Naive thymus-derived CD4-positive, alpha-beta T cell (primary cell): ENCODE measurements at regions of chr6 and their contacts with region 1.

Region 1: DNA sequence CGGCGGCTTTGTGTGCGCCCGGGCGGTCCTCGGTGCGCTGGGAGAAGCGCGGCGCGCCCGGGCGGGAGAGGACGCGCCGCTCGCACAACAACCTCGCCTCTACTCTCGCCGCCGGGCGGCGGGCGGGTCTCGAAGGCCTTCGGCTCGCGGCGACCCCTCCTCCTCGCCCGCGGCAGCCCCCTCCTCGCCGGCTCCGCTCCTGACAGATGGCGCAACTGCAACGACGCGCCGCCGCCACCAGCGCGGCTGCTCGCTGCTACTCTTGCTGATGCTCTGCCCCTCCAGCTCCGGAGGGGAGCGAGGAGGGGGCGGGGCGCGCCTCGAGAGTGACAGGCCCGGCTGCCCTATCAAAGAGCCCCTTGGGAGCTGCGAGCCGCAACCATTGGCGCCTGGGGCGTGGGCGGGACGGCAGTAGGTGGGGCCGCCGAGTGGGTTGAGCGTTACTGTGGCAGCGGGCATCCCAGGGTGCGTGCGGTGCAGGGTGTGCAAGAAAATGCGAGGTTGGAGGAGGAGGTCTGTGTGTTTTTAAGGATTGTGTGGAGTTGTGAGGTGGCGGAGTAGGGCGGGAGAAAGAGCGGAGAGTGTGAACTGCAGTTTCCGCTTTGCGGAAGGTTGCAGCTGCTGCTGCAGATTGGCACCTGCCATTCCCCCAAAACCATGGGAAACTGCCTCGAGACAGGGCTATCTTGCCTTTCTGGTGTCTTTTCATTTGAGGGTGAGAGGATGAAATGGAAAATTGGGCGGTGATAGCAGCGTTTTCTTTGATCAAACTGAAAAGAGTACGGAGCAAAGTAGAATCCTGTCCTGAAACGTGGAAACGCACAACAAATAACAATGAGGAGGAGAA is at the start of gene FYN:
- DNase-seq: peak; percentile 97 to 100 (median 99)
- ATAC-seq: peak; percentile 96
- H3K4me3 ChIP-seq: peak within 1 kb of the TSS; percentile 89
- H3K4me3 Mint-ChIP-seq: peak within 1 kb of the TSS; percentile 95 to 100 (median 98)
- H3K27ac ChIP-seq: peak within 1 kb of the TSS; percentile 86
- H3K27ac Mint-ChIP-seq: peak within 1 kb of the TSS; percentile 93 to 99 (median 96)
- H3K4me1 ChIP-seq: peaks cover 32 to 34% of the 10 kb centered on the region in 2 donors
- H3K4me1 Mint-ChIP-seq: peaks cover 22 to 45% (median 38%) of the 10 kb centered on the region in 7 donors
- H3K27me3 ChIP-seq: no peaks in the 10 kb centered on the region
- H3K27me3 Mint-ChIP-seq: no peaks in the 10 kb centered on the region
- total RNA-seq, gene FYN: 200 to 720 (median 447) TPM

Region 2: DNA sequence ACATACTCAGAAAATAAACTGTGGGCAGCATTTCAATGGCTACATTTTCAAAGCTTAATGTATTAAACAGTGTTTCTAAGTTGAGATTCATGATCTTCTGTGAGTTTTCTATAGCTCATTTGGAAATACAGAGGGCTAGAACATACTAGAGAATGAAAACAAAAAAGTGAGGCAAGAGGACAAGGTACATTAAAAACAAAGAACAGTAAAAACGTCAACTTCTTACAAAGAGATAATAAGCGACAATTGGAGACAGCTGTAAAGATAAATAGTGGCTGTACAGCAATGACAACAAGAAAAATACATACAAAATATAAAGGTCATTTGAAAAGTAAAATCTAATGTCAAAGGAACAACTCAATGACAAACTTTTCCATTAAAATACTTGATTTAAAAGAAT is 484.7 kb before region 1 on chr6:
- CTCF ChIA-PET with region 1: no interaction called
- POLR2A ChIA-PET with region 1: no interaction called
- intact Hi-C with region 1: no loop called
- DNase-seq: no peak
- ATAC-seq: no peak
- H3K4me3 ChIP-seq: no peak overlapping the region
- H3K4me3 Mint-ChIP-seq: no peak overlapping the region
- H3K27ac ChIP-seq: no peak overlapping the region
- H3K27ac Mint-ChIP-seq: no peak overlapping the region
- H3K4me1 ChIP-seq: no peaks in the 10 kb centered on the region
- H3K4me1 Mint-ChIP-seq: no peaks in the 10 kb centered on the region
- H3K27me3 ChIP-seq: no peaks in the 10 kb centered on the region
- H3K27me3 Mint-ChIP-seq: no peaks in the 10 kb centered on the region

Region 3: GRCh38 chr6:111483736-111484632 is 389.4 kb before region 1 on chr6:
- CTCF ChIA-PET with region 1: interaction called, 8 read pairs
- POLR2A ChIA-PET with region 1: interaction called, 3 read pairs
- intact Hi-C with region 1: loop called (anchors 2 to 5 kb)
- DNase-seq: peak in 6 of 9 donors; percentile 80 to 89 (median 86)
- ATAC-seq: peak; percentile 79
- H3K4me3 ChIP-seq: peak overlapping the region; percentile 93
- H3K4me3 Mint-ChIP-seq: peak overlapping the region; percentile 96 to 100 (median 98)
- H3K27ac ChIP-seq: peak overlapping the region; percentile 99
- H3K27ac Mint-ChIP-seq: peak overlapping the region; percentile 95 to 99 (median 99)
- H3K4me1 ChIP-seq: peaks cover 14 to 29% of the 10 kb centered on the region in 2 donors
- H3K4me1 Mint-ChIP-seq: peaks cover 28 to 59% (median 52%) of the 10 kb centered on the region in 7 donors
- H3K27me3 ChIP-seq: no peaks in the 10 kb centered on the region
- H3K27me3 Mint-ChIP-seq: peaks cover 0 to 3% (median 0%) of the 10 kb centered on the region in 5 donors

Region 4: DNA sequence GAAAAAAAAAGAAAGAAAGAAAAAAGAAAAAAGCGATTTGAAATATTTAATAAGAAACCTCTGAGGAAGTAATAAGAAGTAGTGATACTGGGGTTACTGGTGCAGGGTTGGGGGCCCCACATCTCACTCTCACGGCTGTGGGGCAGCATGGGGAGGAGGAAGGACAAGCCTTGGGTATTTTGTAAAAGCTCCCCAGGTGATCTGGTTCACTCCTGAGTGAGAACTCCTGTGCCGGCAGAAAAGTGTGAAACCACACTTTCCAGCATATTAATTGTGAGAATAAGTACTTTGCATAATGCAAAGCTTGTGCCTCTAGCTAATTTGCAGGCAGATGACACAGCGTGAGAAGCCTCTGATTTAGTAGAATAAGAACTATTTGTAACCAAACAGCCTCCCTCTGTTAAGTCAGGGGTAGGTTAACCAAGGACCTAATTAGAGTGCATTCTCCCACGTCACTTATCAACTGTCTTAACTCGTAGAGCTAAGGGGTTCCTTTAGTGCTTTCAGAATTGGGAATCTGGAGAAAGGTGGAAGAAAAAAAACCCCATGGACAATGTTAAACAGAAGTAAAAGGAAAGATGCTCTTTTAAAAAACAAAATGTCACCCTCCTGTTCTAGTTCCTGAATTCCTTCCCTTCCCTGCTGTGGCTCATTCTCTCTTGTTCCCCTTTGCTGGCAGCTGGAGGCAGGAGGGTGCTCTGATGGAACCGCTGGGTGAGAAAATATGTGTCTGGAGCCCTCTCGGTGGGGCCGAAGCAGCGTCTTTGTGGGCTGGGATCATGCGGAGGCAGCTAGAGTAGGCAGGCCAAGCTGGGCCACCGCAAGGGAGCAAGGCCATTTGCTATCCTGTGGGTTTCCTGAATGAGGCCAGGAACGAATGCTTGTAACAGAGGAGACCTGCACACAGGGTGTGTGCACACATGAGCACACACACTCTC is 108.9 kb before region 1 on chr6:
- CTCF ChIA-PET with region 1: interaction called, 5 read pairs
- POLR2A ChIA-PET with region 1: interaction called, 5 read pairs
- intact Hi-C with region 1: loop called (anchors 1 to 2 kb)
- DNase-seq: peak in 2 of 9 donors; percentile 48 to 63
- ATAC-seq: peak; percentile 23
- H3K4me3 ChIP-seq: peak overlapping the region; percentile 18
- H3K4me3 Mint-ChIP-seq: peak overlapping the region; percentile 48 to 94 (median 69)
- H3K27ac ChIP-seq: peak overlapping the region; percentile 97
- H3K27ac Mint-ChIP-seq: peak overlapping the region; percentile 84 to 100 (median 98)
- H3K4me1 ChIP-seq: peaks cover 90 to 93% of the 10 kb centered on the region in 2 donors
- H3K4me1 Mint-ChIP-seq: peaks cover 74 to 100% (median 99%) of the 10 kb centered on the region in 7 donors
- H3K27me3 ChIP-seq: no peaks in the 10 kb centered on the region
- H3K27me3 Mint-ChIP-seq: no peaks in the 10 kb centered on the region

Region 5: GRCh38 chr6:111857674-111858337 is 15.6 kb before region 1 on chr6:
- CTCF ChIA-PET with region 1: no interaction called
- POLR2A ChIA-PET with region 1: interaction called, 6 read pairs
- intact Hi-C with region 1: loop called (anchors 1 to 2 kb)
- DNase-seq: no peak
- ATAC-seq: peak; percentile 26
- H3K4me3 ChIP-seq: no peak overlapping the region
- H3K4me3 Mint-ChIP-seq: peak overlapping the region in 9 of 10 donors; percentile 43 to 93 (median 68)
- H3K27ac ChIP-seq: peak overlapping the region; percentile 32
- H3K27ac Mint-ChIP-seq: peak overlapping the region in 8 of 9 donors; percentile 16 to 90 (median 82)
- H3K4me1 ChIP-seq: peaks cover 59 to 89% of the 10 kb centered on the region in 2 donors
- H3K4me1 Mint-ChIP-seq: peaks cover 0 to 99% (median 82%) of the 10 kb centered on the region in 7 donors
- H3K27me3 ChIP-seq: no peaks in the 10 kb centered on the region
- H3K27me3 Mint-ChIP-seq: no peaks in the 10 kb centered on the region

Region 6: GRCh38 chr6:111985202-111985731 is 111.9 kb after region 1 on chr6:
- CTCF ChIA-PET with region 1: interaction called, 6 read pairs
- POLR2A ChIA-PET with region 1: interaction called, 14 read pairs
- intact Hi-C with region 1: no loop called
- DNase-seq: peak in 5 of 9 donors; percentile 34 to 50 (median 43)
- ATAC-seq: peak; percentile 54
- H3K4me3 ChIP-seq: no peak overlapping the region
- H3K4me3 Mint-ChIP-seq: peak overlapping the region in 9 of 10 donors; percentile 1 to 75 (median 56)
- H3K27ac ChIP-seq: peak overlapping the region; percentile 47
- H3K27ac Mint-ChIP-seq: peak overlapping the region; percentile 2 to 96 (median 77)
- H3K4me1 ChIP-seq: peaks cover 27 to 87% of the 10 kb centered on the region in 2 donors
- H3K4me1 Mint-ChIP-seq: peaks cover 59 to 99% (median 90%) of the 10 kb centered on the region in 7 donors
- H3K27me3 ChIP-seq: no peaks in the 10 kb centered on the region
- H3K27me3 Mint-ChIP-seq: no peaks in the 10 kb centered on the region

Region 7: DNA sequence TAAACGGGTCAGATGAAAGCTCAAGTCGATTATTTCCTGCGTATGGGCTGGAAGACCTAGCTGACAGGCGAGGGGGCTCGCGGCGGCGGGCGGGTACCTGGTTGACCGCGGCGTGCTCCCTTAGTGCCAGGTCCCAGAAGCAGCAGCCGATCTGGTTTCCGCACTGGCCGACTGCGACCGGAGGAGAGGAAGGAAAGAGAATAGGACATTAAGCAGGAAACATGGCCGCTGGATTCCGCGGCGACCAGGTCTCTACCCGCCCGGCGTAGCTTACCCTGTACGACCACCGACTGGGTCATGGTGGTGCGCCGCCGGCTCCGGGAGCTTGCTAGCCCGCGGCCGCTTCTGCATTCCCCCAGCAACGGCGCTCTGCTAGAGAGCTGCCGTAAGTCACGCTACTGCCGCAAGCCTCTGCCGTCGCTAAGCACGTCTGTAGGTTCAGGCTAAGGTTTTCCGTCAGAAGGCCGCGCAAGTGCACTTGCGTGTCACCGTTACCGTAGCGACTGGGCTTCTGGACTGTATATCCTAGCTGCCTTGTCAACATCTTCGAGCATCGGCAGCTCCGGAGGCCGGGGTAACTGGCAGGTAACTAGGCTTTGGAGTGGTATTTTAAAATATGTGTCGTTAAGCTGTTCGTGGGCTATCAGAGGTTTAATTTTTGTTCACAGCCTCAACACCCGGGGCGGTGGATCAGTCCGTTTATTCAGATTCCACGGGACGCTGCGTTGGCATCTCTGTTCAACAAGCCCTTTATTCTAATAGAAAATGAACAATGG is 213.9 kb after region 1 on chr6 and contains the starts of genes FAM229B and TUBE1:
- CTCF ChIA-PET with region 1: no interaction called
- POLR2A ChIA-PET with region 1: no interaction called
- intact Hi-C with region 1: loop called (anchors 1 kb)
- DNase-seq: peak; percentile 70 to 96 (median 90)
- ATAC-seq: peak; percentile 98
- H3K4me3 ChIP-seq: peak within 1 kb of the TSS; percentile 64
- H3K4me3 Mint-ChIP-seq: no peak within 1 kb of the TSS
- H3K27ac ChIP-seq: peak within 1 kb of the TSS; percentile 87
- H3K27ac Mint-ChIP-seq: peak within 1 kb of the TSS in 1 of 9 donors; percentile 65
- H3K4me1 ChIP-seq: peaks cover 0 to 7% of the 10 kb centered on the region in 2 donors
- H3K4me1 Mint-ChIP-seq: peaks cover 0 to 18% (median 10%) of the 10 kb centered on the region in 7 donors
- H3K27me3 ChIP-seq: peaks cover 0 to 3% of the 10 kb centered on the region in 2 donors
- H3K27me3 Mint-ChIP-seq: peaks cover 0 to 37% (median 6%) of the 10 kb centered on the region in 5 donors
- total RNA-seq, gene FAM229B: 0.70 to 5.8 (median 2.0) TPM
- total RNA-seq, gene TUBE1: 19.3 to 50.0 (median 35.1) TPM